ENCODE measurements at regions of chr17 and their contacts with region 1.

Region 1: DNA sequence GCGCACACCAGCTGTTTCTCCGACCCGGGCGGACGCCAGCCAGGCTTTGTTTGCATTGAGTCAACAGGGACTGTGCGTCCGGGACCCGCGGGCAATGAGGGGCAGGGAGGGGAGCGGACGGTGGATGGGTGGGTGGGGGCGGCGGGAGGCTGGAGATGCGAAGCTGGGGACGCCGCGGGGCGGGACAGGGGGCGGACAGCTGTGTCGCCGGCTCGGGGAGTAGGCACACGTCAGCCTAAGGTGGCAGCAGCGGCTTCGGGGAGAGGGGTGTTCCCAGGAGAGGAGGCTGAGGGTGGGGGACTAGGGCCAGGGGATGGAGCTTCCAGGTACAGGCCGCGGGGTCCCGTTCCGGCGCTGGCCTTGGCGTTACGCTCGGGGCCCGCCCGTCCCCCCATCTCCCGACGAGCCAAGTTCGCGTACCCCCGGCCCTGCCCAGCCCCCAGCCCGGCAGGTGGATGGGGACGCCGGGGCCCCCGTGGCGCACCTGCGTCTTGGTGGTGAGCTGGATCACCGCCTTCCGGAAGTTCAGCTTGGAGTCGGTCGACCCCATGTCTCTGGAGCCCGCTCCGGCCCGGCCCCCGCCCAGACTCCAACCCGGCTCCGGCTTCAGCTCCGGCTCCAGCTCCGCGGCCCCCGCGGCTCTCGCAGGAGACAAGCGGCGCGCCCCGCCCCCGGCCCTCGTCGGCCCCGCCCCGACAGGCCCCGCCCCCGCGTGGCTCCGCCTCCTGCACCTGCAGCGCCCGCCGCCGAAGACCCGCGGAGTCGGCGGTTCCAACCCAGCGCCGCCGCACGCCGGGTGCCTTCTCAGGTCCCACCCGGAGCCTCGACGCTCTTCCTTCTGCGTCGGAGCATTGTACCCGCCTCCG is at the start of gene HID1:
- DNase-seq: peak; percentile 60 to 62
- H3K4me3 ChIP-seq: peak within 1 kb of the TSS; percentile 96
- H3K27ac ChIP-seq: no peak within 1 kb of the TSS
- H3K4me1 ChIP-seq: peaks cover 43% of the 10 kb centered on the region
- H3K27me3 ChIP-seq: 0 out of 2 replicates have a peak, but pooled peaks cover 3% of the 10 kb centered on the region
- CTCF ChIP-seq: no peak
- total RNA-seq, gene HID1: 32.1 and 49.7 TPM in 2 replicates

Region 2: GRCh38 chr17:74954665-74955421 is 17.5 kb before region 1 on chr17:
- CTCF ChIA-PET with region 1: no interaction called
- POLR2A ChIA-PET with region 1: no interaction called
- intact Hi-C with region 1: no loop called
- DNase-seq: no peak
- H3K4me3 ChIP-seq: no peak overlapping the region
- H3K27ac ChIP-seq: no peak overlapping the region
- H3K4me1 ChIP-seq: peaks cover 7% of the 10 kb centered on the region; the same call in 1 of the 2 replicates
- H3K27me3 ChIP-seq: no peaks in the 10 kb centered on the region
- CTCF ChIP-seq: no peak

Region 3: DNA sequence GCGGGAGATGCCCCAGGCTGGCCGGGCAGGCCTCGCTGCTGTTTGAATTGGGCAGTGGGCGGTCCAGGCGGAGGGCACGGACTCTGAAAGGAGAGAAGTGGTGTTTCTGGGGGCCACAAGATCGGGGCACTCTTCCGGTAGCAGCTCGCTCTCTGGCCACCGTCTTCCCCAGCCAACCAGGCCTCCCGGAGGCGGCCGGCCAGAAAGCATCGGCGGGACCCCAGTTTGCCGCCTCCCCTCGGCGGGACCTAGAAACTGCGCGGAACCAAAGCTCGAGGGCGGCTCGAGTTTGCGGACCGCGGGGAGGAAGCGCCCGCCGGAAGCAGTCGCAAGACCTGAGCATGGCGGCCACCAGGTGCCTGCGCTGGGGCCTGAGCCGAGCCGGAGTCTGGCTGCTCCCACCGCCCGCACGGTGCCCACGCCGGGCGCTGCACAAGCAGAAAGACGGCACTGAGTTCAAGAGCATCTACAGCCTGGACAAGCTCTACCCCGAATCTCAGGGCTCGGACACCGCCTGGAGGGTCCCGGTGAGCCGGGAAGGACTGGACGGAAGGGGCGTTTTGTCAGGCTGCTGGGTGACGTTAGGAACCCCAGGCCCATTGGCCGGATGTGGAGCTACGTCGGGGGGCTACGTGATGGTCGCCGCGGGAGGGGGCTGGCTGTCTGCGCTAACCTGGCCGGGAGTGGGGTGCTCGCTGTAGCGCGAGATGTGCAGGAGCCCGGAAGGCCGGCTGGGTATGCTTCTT is 40.2 kb after region 1 on chr17 and contains the start of gene MRPL58:
- CTCF ChIA-PET with region 1: interaction called, 12 read pairs
- POLR2A ChIA-PET with region 1: interaction called, 5 read pairs
- intact Hi-C with region 1: loop called (anchors 2 kb)
- DNase-seq: peak; percentile 74 to 83
- H3K4me3 ChIP-seq: peak within 1 kb of the TSS; percentile 90
- H3K27ac ChIP-seq: peak within 1 kb of the TSS; percentile 43
- H3K4me1 ChIP-seq: peaks cover 31% of the 10 kb centered on the region
- H3K27me3 ChIP-seq: no peaks in the 10 kb centered on the region
- CTCF ChIP-seq: peak; percentile 70
- total RNA-seq, gene MRPL58: 42.8 and 48.4 TPM in 2 replicates

Region 4: DNA sequence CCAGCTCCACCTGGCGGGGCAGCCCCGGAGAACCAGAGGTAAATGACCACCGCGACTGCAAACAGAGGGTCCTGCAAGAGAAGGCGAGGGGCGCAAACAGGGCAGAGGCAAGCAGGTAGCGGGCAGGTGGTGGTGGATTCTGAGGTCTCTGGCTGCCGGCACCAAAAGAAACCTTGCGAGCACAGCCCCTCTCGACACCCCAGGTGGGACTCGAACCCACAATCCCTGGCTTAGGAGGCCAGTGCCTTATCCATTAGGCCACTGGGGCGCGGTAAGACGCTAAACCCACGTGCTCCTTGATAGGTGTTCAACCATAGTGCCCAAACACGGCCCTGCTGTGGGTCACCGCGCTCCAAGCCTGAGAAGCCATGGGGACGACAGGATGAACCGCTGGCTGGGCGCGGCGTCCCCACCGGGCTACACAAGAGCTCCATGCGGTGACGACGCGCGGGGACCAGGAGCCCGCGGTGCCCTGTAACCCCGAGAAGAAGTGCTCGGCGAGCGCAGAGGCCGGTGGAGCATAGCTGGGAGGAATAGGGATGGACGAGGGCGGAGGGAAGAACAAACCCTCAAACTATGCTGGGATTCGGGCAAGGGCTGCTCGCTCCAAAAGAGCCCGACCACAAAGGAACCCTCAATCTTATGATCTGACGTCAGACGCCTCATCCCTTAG is 62.0 kb after region 1 on chr17:
- CTCF ChIA-PET with region 1: no interaction called
- POLR2A ChIA-PET with region 1: interaction called, 3 read pairs
- intact Hi-C with region 1: loop called (anchors 2 kb)
- DNase-seq: peak; percentile 88
- H3K4me3 ChIP-seq: peak overlapping the region; percentile 98
- H3K27ac ChIP-seq: peak overlapping the region; percentile 90
- H3K4me1 ChIP-seq: peaks cover 30% of the 10 kb centered on the region
- H3K27me3 ChIP-seq: no peaks in the 10 kb centered on the region
- CTCF ChIP-seq: peak; percentile 45; the same call in 1 of the 2 replicates

Region 5: GRCh38 chr17:75059369-75060345 is 87.3 kb after region 1 on chr17:
- CTCF ChIA-PET with region 1: no interaction called
- POLR2A ChIA-PET with region 1: interaction called, 12 read pairs
- intact Hi-C with region 1: no loop called
- DNase-seq: peak in 1 of 2 experiments; percentile 46
- H3K4me3 ChIP-seq: no peak overlapping the region
- H3K27ac ChIP-seq: no peak overlapping the region
- H3K4me1 ChIP-seq: no peaks in the 10 kb centered on the region
- H3K27me3 ChIP-seq: no peaks in the 10 kb centered on the region
- CTCF ChIP-seq: peak; percentile 55; the same call in 1 of the 2 replicates

Region 6: DNA sequence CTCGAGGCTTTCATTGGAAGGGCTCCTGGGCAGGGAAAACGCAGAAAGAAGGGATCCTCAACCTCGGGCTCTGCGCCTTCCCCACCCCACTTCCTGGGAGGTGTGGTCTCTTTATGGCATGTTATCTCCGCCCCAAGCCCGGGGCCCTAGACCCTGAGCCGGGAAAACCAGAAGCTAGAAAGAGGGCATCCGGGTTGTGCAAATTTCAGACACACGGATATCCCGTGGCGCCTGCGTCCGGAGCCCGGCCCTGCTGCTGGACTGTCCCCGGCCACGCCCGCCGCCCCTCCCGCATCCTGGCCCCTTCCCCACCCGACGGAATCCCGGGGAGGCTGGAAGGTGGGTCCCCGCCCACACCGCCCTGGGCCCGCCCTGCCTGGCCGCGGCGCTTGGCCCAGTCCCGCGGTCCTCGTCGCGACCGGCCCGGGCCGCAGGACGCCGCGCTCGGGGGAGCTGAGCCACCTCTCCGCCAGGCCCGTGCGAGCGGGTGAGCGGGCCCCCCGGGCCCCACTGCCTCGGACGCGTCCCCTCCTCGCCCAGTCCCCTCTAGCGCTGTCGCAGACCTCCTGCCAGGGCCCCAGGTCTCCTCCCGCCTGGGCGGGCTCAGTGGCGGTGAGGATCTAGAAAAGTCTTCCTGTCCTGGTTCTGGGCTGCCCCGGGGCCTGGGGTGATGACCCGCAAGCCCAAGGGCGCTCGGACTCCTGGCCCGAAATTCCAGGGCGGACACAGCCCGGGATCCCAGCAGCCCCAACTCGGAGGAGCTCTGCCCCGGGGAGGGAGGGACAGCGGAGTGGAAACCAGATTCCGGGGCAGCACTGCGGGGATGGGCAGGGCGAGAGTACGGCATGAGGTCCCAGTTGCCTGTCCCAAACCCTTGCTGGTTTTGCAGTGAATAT is 115.5 kb after region 1 on chr17 and contains the start of gene SLC16A5:
- CTCF ChIA-PET with region 1: no interaction called
- POLR2A ChIA-PET with region 1: interaction called, 12 read pairs
- intact Hi-C with region 1: no loop called
- DNase-seq: peak; percentile 93 to 98
- H3K4me3 ChIP-seq: peak within 1 kb of the TSS; percentile 93
- H3K27ac ChIP-seq: peak within 1 kb of the TSS; percentile 91
- H3K4me1 ChIP-seq: peaks cover 84% of the 10 kb centered on the region
- H3K27me3 ChIP-seq: no peaks in the 10 kb centered on the region
- CTCF ChIP-seq: no peak
- total RNA-seq, gene SLC16A5: 70.2 and 88.5 TPM in 2 replicates

Region 7: GRCh38 chr17:75205037-75205792 is 232.9 kb after region 1 on chr17 and contains the start of gene NUP85:
- CTCF ChIA-PET with region 1: interaction called, 20 read pairs
- POLR2A ChIA-PET with region 1: no interaction called
- intact Hi-C with region 1: no loop called
- DNase-seq: peak; percentile 90 to 96
- H3K4me3 ChIP-seq: peak within 1 kb of the TSS; percentile 93
- H3K27ac ChIP-seq: peak within 1 kb of the TSS; percentile 92
- H3K4me1 ChIP-seq: peaks cover 14% of the 10 kb centered on the region
- H3K27me3 ChIP-seq: no peaks in the 10 kb centered on the region
- CTCF ChIP-seq: no peak
- total RNA-seq, gene NUP85: 64.2 and 73.1 TPM in 2 replicates

Region 8: DNA sequence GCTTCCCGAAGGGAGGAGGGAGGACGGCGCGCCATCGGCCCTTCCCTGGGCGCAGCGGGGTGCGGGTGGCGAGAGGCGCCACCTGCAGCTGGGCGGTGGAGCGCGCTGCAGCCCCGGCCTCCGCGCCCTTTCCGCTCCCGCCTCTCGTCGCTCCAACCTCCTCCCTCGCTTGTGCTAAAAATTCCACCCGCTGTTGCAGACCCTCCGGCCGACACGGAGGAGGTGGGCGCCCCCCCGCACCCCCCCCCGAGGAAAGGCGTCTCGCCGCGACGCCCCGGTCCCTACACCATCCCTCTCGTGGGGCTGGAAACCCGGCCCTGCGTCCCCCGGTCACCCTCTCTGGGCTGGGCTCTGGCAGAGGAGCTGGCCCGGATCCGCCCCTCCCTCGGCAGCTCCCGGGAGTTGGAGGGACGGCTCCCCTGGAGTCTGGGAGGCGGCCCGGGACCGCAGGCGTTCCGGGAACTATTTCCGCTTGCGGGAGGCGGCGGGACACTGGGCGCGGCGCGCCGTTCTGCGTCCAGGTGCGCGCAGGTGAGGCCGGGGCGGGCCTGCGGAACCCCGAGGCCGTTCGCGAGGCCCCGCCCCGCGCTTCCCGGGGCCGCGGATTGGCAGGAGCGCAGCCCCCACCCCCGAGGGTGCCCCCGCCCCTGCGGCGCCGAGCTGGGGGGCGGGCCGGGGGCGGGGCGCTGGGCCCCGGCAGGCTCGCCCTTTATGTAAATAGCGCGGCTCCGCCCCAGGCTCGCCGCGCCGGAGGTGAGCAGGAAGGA is 552.8 kb after region 1 on chr17 and contains the start of gene LLGL2:
- CTCF ChIA-PET with region 1: no interaction called
- POLR2A ChIA-PET with region 1: no interaction called
- intact Hi-C with region 1: no loop called
- DNase-seq: peak; percentile 77 to 95
- H3K4me3 ChIP-seq: peak within 1 kb of the TSS; percentile 100
- H3K27ac ChIP-seq: peak within 1 kb of the TSS; percentile 55
- H3K4me1 ChIP-seq: peaks cover 21% of the 10 kb centered on the region
- H3K27me3 ChIP-seq: no peaks in the 10 kb centered on the region
- CTCF ChIP-seq: peak; percentile 60
- total RNA-seq, gene LLGL2: 138 and 156 TPM in 2 replicates

Region 9: GRCh38 chr17:76171706-76172105 is 1199.4 kb after region 1 on chr17:
- CTCF ChIA-PET with region 1: no interaction called
- POLR2A ChIA-PET with region 1: interaction called, 16 read pairs
- intact Hi-C with region 1: no loop called
- DNase-seq: no peak
- H3K4me3 ChIP-seq: no peak overlapping the region
- H3K27ac ChIP-seq: no peak overlapping the region
- H3K4me1 ChIP-seq: no peaks in the 10 kb centered on the region
- H3K27me3 ChIP-seq: no peaks in the 10 kb centered on the region
- CTCF ChIP-seq: no peak